SK-N-SH (cell line): ENCODE measurements at regions of chr7 and their contacts with region 1.

Region 1: GRCh38 chr7:148286150-148286549 is 304.4 kb upstream of the C7orf33 start:
- DNase-seq: peak; percentile 65
- H3K4me3 ChIP-seq: no peak overlapping the region; a peak in 1 of 4 replicates
- H3K27ac ChIP-seq: no peak overlapping the region
- H3K4me1 ChIP-seq: no peaks in the 10 kb centered on the region; a peak in 1 of 4 replicates
- H3K27me3 ChIP-seq: no peaks in the 10 kb centered on the region
- CTCF ChIP-seq: peak; percentile 74
- EP300 ChIP-seq: no peak
- RAD21 ChIP-seq: peak; percentile 74

Region 2: GRCh38 chr7:148153616-148154284 is 132.4 kb before region 1 on chr7:
- CTCF ChIA-PET with region 1: no interaction called
- POLR2A ChIA-PET with region 1: no interaction called
- DNase-seq: peak; percentile 48
- H3K4me3 ChIP-seq: no peak overlapping the region
- H3K27ac ChIP-seq: peak overlapping the region in 1 of 2 experiments; percentile 90; a peak in 2 of 4 replicates
- H3K4me1 ChIP-seq: peaks cover 7 to 28% of the 10 kb centered on the region in 2 experiments; a peak in 2 of 4 replicates
- H3K27me3 ChIP-seq: no peaks in the 10 kb centered on the region
- CTCF ChIP-seq: no peak
- EP300 ChIP-seq: peak; percentile 11 to 26; a peak in 2 of 4 replicates
- RAD21 ChIP-seq: no peak

Region 3: GRCh38 chr7:148270586-148270985 is 15.6 kb before region 1 on chr7:
- CTCF ChIA-PET with region 1: interaction called, 61 read pairs
- POLR2A ChIA-PET with region 1: no interaction called
- DNase-seq: no peak
- H3K4me3 ChIP-seq: no peak overlapping the region
- H3K27ac ChIP-seq: no peak overlapping the region
- H3K4me1 ChIP-seq: no peaks in the 10 kb centered on the region
- H3K27me3 ChIP-seq: no peaks in the 10 kb centered on the region
- CTCF ChIP-seq: no peak
- EP300 ChIP-seq: no peak
- RAD21 ChIP-seq: no peak

Region 4: DNA sequence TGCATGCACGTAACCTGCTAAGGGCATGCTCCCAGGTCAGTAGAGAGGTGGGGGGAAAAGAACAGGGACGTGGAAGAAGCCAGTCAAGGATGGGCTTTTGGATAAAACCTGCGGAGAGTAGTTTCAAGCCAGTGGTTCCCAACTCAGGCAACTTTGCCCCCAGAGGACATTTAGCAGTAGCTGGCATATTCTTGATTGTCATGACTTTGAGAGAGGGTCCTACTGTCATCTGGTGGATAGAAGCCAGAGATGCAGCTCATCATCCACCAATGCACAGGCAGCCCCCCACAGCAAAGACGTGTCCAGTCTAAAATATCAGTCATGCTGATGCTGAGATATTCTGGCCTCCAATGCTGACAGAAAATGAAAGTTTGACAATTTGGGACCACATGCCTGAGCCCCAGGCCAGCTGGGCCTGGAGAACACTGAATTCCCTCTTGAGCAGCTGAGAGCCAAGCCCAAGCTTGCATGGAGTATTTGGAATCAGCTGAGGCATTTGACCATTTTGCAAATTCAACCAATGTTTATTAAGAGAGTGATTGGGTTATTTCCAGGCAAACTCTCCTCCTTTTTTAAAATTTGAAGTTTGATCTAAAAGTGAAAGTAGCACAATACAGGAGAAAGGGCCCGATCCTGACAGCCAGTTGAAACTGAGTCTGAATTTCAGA is 194.5 kb after region 1 on chr7:
- CTCF ChIA-PET with region 1: interaction called, 14 read pairs
- POLR2A ChIA-PET with region 1: interaction called, 5 read pairs
- DNase-seq: no peak
- H3K4me3 ChIP-seq: no peak overlapping the region
- H3K27ac ChIP-seq: no peak overlapping the region
- H3K4me1 ChIP-seq: peaks cover 0 to 10% of the 10 kb centered on the region in 2 experiments; a peak in 2 of 4 replicates
- H3K27me3 ChIP-seq: no peaks in the 10 kb centered on the region
- CTCF ChIP-seq: no peak
- EP300 ChIP-seq: no peak
- RAD21 ChIP-seq: peak; percentile 35